Activated CD4-positive, alpha-beta memory T cell treated with anti-CD3 and anti-CD28 coated beads for 36 hours (primary cell): ENCODE measurements at regions of chr5 and their contacts with region 1.

Region 1: DNA sequence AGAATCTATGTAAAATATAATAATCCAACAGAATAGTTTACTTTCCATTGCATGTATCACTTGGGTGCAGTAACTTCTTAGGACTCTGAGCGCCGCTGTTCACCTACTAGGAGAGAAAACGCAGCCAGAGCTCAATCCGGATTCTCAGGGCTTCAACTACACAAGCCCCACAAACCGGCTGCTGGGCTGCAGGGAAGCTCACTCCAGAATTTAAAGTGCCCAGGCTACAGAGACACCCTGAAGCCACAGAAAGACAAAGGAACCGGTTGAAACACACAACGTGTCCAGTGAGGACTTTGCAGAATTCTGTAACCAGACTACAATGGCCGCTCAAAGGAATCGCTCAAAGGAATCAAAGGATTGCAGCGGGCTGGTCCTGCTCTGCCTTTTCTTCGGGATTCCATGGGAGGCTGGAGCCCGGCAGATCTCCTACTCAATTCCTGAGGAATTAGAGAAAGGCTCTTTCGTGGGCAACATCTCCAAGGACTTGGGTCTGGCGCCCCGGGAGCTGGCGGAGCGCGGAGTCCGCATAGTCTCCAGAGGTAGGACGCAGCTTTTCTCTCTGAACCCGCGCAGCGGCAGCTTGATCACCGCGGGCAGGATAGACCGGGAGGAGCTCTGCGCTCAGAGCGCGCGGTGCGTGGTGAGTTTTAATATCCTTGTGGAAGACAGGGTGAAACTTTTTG is at the start of gene PCDHGA10:
- DNase-seq: peak; percentile 69
- H3K4me3 Mint-ChIP-seq: peak within 1 kb of the TSS; percentile 66
- H3K27ac Mint-ChIP-seq: no peak within 1 kb of the TSS
- H3K4me1 Mint-ChIP-seq: peaks cover 18% of the 10 kb centered on the region
- H3K27me3 Mint-ChIP-seq: peaks cover 61% of the 10 kb centered on the region
- total RNA-seq, gene PCDHGA10: 0.07 to 0.10 TPM

Region 2: GRCh38 chr5:141223112-141223783 is 189.7 kb before region 1 on chr5 and contains the start of gene PCDHB14:
- CTCF ChIA-PET with region 1: no interaction called
- POLR2A ChIA-PET with region 1: no interaction called
- intact Hi-C with region 1: no loop called
- DNase-seq: no peak
- H3K4me3 Mint-ChIP-seq: no peak within 1 kb of the TSS
- H3K27ac Mint-ChIP-seq: no peak within 1 kb of the TSS
- H3K4me1 Mint-ChIP-seq: peaks cover 5% of the 10 kb centered on the region
- H3K27me3 Mint-ChIP-seq: peaks cover 46% of the 10 kb centered on the region
- total RNA-seq, gene PCDHB14: not detected

Region 3: DNA sequence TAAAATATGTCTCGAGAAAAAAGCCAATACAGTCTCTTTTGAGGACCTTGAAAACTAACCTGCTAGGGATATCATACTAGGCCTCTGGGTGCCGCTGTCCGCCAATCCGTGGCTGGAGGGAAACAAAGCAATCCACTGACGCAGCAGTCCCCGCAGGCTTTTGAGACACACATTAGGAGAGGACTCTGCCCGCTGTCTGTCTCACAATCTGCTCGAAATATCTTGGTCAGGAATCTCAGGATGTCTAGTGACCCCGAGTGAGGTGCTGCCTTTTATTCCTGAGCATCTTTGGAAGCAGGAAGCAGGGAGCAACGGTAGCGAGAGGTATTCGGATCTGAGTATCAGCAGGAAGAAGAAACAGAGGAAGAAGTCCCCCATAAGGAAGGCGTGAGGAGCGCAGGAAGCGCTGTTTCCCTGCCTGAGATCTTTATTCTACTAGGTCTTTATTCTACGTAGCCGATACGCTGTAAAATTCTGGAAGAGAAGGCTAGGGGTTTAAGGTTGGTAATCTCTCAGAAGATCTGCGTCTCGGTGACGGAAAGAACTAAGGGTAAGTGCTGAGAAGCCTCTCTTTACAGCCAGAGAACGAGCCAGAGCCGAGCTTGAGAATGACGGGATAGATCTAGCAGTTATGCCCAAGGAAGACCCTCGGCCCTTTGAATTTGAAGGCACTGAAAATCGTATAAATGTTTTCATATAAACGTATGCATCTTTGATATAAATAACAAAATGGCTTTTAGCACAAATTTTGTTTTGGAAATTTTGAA is 86.7 kb before region 1 on chr5:
- CTCF ChIA-PET with region 1: interaction called, 3 read pairs
- POLR2A ChIA-PET with region 1: no interaction called
- intact Hi-C with region 1: loop called (anchors 2 kb)
- DNase-seq: peak; percentile 82
- H3K4me3 Mint-ChIP-seq: peak overlapping the region; percentile 82
- H3K27ac Mint-ChIP-seq: peak overlapping the region; percentile 28
- H3K4me1 Mint-ChIP-seq: peaks cover 9% of the 10 kb centered on the region
- H3K27me3 Mint-ChIP-seq: peaks cover 25% of the 10 kb centered on the region

Region 4: GRCh38 chr5:141369994-141370848 is 42.8 kb before region 1 on chr5 and contains the start of gene PCDHGB3:
- CTCF ChIA-PET with region 1: interaction called, 13 read pairs
- POLR2A ChIA-PET with region 1: no interaction called
- intact Hi-C with region 1: loop called (anchors 10 kb)
- DNase-seq: peak; percentile 55
- H3K4me3 Mint-ChIP-seq: peak within 1 kb of the TSS; percentile 68
- H3K27ac Mint-ChIP-seq: no peak within 1 kb of the TSS
- H3K4me1 Mint-ChIP-seq: peaks cover 5% of the 10 kb centered on the region
- H3K27me3 Mint-ChIP-seq: peaks cover 48% of the 10 kb centered on the region
- total RNA-seq, gene PCDHGB3: 0.10 TPM in 1 of 2 experiments, not detected in the other

Region 5: GRCh38 chr5:141389153-141390042 is 23.6 kb before region 1 on chr5:
- CTCF ChIA-PET with region 1: no interaction called
- POLR2A ChIA-PET with region 1: no interaction called
- intact Hi-C with region 1: no loop called
- DNase-seq: no peak
- H3K4me3 Mint-ChIP-seq: no peak overlapping the region
- H3K27ac Mint-ChIP-seq: no peak overlapping the region
- H3K4me1 Mint-ChIP-seq: no peaks in the 10 kb centered on the region
- H3K27me3 Mint-ChIP-seq: peaks cover 65% of the 10 kb centered on the region

Region 6: GRCh38 chr5:141524604-141525597 is 111.9 kb after region 1 on chr5:
- CTCF ChIA-PET with region 1: interaction called, 23 read pairs
- POLR2A ChIA-PET with region 1: no interaction called
- intact Hi-C with region 1: no loop called
- DNase-seq: peak; percentile 60
- H3K4me3 Mint-ChIP-seq: no peak overlapping the region
- H3K27ac Mint-ChIP-seq: peak overlapping the region; percentile 15
- H3K4me1 Mint-ChIP-seq: peaks cover 36% of the 10 kb centered on the region
- H3K27me3 Mint-ChIP-seq: no peaks in the 10 kb centered on the region